ENCODE measurements at regions of chr5 and their contacts with region 1.

Region 1: DNA sequence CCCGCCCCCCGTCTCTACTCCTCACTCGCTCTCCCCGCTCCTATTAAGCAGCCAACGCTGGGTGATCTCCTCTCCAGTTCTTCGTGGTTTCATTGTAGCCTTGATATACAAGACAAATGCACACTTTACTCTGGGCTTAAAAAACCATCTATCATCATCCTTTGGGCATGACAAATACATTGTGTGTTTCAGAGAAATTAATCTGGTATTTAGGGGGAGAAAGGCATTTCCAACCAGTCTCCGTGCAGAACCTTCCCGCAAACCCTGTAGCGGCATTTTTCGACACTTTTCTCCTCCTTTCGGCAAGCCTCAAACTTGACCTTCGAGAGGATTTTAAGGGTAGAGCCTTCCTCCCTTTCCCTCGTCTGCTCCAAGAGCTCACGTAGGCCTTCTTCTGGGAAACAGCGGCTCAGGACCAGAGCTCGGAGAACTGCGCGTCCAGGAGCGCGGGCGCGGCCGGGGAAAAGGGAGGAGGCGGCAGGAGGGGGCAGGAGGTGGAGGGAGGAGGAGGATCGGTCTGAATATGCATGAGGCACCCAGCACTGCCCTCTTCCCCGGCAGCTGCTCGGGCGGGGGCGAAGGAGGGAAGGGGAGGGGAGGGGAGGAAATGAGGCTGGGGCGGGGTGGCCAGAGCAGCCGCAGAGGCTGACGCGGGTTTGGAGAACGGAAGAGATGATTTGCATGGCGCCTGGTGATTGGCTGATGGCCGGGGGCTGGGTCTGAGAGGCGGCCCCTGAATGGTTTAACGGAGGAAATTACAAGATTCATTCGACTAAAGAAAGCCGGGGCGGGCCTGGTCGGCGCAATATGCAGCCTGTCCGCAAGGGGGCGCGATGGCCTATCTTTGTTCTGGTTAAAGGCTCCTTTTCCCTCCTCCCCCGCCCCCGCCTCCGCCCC is 127.5 kb downstream of the TMEM161B start:
- DNase-seq: peak; percentile 99
- H3K4me3 Mint-ChIP-seq: no peak overlapping the region
- H3K27ac Mint-ChIP-seq: no peak overlapping the region
- H3K4me1 Mint-ChIP-seq: peaks cover 9% of the 10 kb centered on the region
- H3K27me3 Mint-ChIP-seq: no peaks in the 10 kb centered on the region
- CTCF ChIP-seq: peak; percentile 84

Region 2: GRCh38 chr5:88262116-88262515 is 121.0 kb after region 1 on chr5:
- CTCF ChIA-PET with region 1: interaction called, 11 read pairs
- intact Hi-C with region 1: no loop called
- DNase-seq: no peak
- H3K4me3 Mint-ChIP-seq: no peak overlapping the region
- H3K27ac Mint-ChIP-seq: no peak overlapping the region
- H3K4me1 Mint-ChIP-seq: no peaks in the 10 kb centered on the region
- H3K27me3 Mint-ChIP-seq: no peaks in the 10 kb centered on the region
- CTCF ChIP-seq: no peak

Region 3: GRCh38 chr5:88268385-88269184 is 127.5 kb after region 1 on chr5 and contains the start of gene TMEM161B:
- CTCF ChIA-PET with region 1: no interaction called
- intact Hi-C with region 1: loop called (anchors 2 kb)
- DNase-seq: peak; percentile 95
- H3K4me3 Mint-ChIP-seq: peak within 1 kb of the TSS; percentile 98
- H3K27ac Mint-ChIP-seq: peak within 1 kb of the TSS; percentile 94
- H3K4me1 Mint-ChIP-seq: peaks cover 32% of the 10 kb centered on the region
- H3K27me3 Mint-ChIP-seq: no peaks in the 10 kb centered on the region
- CTCF ChIP-seq: no peak
- total RNA-seq, gene TMEM161B: 34.1 and 35.7 TPM in 2 replicates

Region 4: DNA sequence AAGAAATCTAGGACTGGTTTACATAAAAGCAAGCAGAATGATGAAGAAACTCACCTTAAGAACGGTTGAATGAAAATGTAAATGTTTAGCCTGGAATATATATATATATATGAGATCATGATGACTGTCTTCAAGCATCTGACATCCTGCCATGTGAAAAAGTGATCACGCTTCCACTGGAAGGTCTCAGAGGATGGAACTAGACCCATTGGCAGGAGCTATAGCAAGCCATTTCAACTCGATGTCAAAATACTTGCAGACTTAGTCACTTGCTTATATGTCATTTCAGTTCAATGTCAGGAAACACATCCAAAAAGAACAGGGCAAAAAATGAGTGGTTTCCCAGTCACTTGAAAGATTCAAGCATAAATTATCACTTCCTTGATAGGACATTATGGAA is 149.7 kb after region 1 on chr5:
- CTCF ChIA-PET with region 1: no interaction called
- intact Hi-C with region 1: no loop called
- DNase-seq: no peak
- H3K4me3 Mint-ChIP-seq: no peak overlapping the region
- H3K27ac Mint-ChIP-seq: no peak overlapping the region
- H3K4me1 Mint-ChIP-seq: no peaks in the 10 kb centered on the region
- H3K27me3 Mint-ChIP-seq: no peaks in the 10 kb centered on the region
- CTCF ChIP-seq: no peak

Region 5: GRCh38 chr5:88680253-88681132 is 539.4 kb after region 1 on chr5:
- CTCF ChIA-PET with region 1: interaction called, 3 read pairs
- intact Hi-C with region 1: loop called (anchors 1 kb)
- DNase-seq: peak; percentile 96
- H3K4me3 Mint-ChIP-seq: peak overlapping the region; percentile 65
- H3K27ac Mint-ChIP-seq: no peak overlapping the region
- H3K4me1 Mint-ChIP-seq: peaks cover 22% of the 10 kb centered on the region
- H3K27me3 Mint-ChIP-seq: peaks cover 12% of the 10 kb centered on the region
- CTCF ChIP-seq: peak; percentile 99

Measured in Calu3 (cell line).